ENCODE measurements at regions of chr10 and their contacts with region 1.

Region 1: GRCh38 chr10:120177330-120177729 is 279.7 kb upstream of the PLPP4 start:
- DNase-seq: no peak
- ATAC-seq: no peak
- H3K4me3 ChIP-seq: no peak overlapping the region
- H3K27ac ChIP-seq: no peak overlapping the region
- H3K4me1 ChIP-seq: no peaks in the 10 kb centered on the region
- H3K27me3 ChIP-seq: peaks cover 61% of the 10 kb centered on the region
- CTCF ChIP-seq: no peak
- POLR2A ChIP-seq: no peak
- RAD21 ChIP-seq: no peak

Region 2: GRCh38 chr10:120156614-120157274 is 20.6 kb before region 1 on chr10:
- CTCF ChIA-PET with region 1: no interaction called
- POLR2A ChIA-PET with region 1: no interaction called
- RAD21 ChIA-PET with region 1: no interaction called
- intact Hi-C with region 1: loop called (anchors 2 kb)
- DNase-seq: no peak
- ATAC-seq: no peak
- H3K4me3 ChIP-seq: no peak overlapping the region
- H3K27ac ChIP-seq: no peak overlapping the region
- H3K4me1 ChIP-seq: no peaks in the 10 kb centered on the region
- H3K27me3 ChIP-seq: peaks cover under 1% of the 10 kb centered on the region; the same call in 1 of the 2 replicates
- CTCF ChIP-seq: no peak
- POLR2A ChIP-seq: no peak
- RAD21 ChIP-seq: no peak

Region 3: GRCh38 chr10:120841522-120842189 is 664.3 kb after region 1 on chr10:
- CTCF ChIA-PET with region 1: no interaction called
- POLR2A ChIA-PET with region 1: no interaction called
- RAD21 ChIA-PET with region 1: no interaction called
- intact Hi-C with region 1: no loop called
- DNase-seq: no peak
- ATAC-seq: no peak
- H3K4me3 ChIP-seq: no peak overlapping the region
- H3K27ac ChIP-seq: no peak overlapping the region
- H3K4me1 ChIP-seq: no peaks in the 10 kb centered on the region
- H3K27me3 ChIP-seq: no peaks in the 10 kb centered on the region
- CTCF ChIP-seq: no peak
- POLR2A ChIP-seq: no peak
- RAD21 ChIP-seq: no peak